Activated naive CD8-positive, alpha-beta T cell treated with anti-CD3 and anti-CD28 coated beads, Interleukin-2, amount 10 ng/mL, durations not matched to agents 7 days and 5 days (primary cell): ENCODE measurements at regions of chr1 and their contacts with region 1.

Region 1: GRCh38 chr1:52404116-52404986 is at the starts of genes ORC1 and PRPF38A:
- DNase-seq: peak; percentile 96
- ATAC-seq: peak; percentile 92
- H3K4me3 Mint-ChIP-seq: peak within 1 kb of the TSS; percentile 100
- H3K27ac Mint-ChIP-seq: peak within 1 kb of the TSS; percentile 100
- H3K4me1 Mint-ChIP-seq: peaks cover 45% of the 10 kb centered on the region
- H3K27me3 Mint-ChIP-seq: no peaks in the 10 kb centered on the region
- total RNA-seq, gene ORC1: 25.6 to 25.7 TPM
- total RNA-seq, gene PRPF38A: 87.1 to 92.1 TPM

Region 2: DNA sequence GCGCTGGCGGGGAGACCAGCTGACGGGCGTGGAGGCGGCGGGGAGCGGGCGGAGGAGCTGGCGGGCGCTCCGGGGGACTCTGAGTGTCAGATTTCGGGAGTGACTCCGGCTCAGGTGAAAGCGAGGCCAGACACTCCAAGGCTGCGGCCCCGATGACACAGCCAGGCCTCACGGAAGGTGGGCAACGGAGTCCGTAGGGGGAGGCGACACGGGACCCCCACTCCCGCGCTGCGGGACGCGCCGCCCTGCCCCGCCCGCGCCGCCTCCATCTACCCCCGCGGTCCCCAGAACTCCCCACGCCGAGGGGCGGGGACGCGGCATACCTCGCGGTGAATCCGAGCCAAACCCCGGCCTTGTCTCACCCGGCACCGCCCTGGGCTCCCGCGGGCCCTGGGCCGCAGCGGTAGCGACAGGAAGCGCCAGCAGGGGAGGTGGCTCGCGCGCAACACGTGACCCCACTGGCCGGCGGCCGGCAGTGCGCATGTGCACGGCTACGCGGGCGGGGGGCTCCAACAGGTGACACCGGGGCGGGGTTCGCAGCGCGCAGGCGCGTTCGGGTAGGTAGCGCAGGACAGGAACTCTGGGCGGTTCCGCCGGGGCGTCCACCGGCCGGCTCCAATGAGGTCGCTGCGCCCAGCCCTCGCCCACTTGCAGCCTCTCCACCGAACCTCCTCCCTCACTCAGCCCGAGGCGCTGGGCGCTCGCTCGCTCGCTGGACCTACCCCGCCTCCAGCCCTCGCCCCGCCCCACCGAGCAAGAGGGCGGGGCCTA is 38.4 kb before region 1 on chr1 and contains the start of gene CC2D1B:
- POLR2A ChIA-PET with region 1: interaction called, 34 read pairs
- DNase-seq: peak; percentile 100
- ATAC-seq: peak; percentile 97
- H3K4me3 Mint-ChIP-seq: peak within 1 kb of the TSS; percentile 98
- H3K27ac Mint-ChIP-seq: peak within 1 kb of the TSS; percentile 98
- H3K4me1 Mint-ChIP-seq: peaks cover 34% of the 10 kb centered on the region
- H3K27me3 Mint-ChIP-seq: no peaks in the 10 kb centered on the region
- total RNA-seq, gene CC2D1B: 69.3 to 75.6 TPM

Region 3: GRCh38 chr1:52416811-52417210 is 12.5 kb after region 1 on chr1:
- POLR2A ChIA-PET with region 1: interaction called, 22 read pairs
- DNase-seq: no peak
- ATAC-seq: no peak
- H3K4me3 Mint-ChIP-seq: no peak overlapping the region
- H3K27ac Mint-ChIP-seq: peak overlapping the region; percentile 45
- H3K4me1 Mint-ChIP-seq: peaks cover 9% of the 10 kb centered on the region
- H3K27me3 Mint-ChIP-seq: no peaks in the 10 kb centered on the region

Region 4: GRCh38 chr1:52424231-52424636 is 19.9 kb after region 1 on chr1:
- POLR2A ChIA-PET with region 1: interaction called, 29 read pairs
- DNase-seq: no peak
- ATAC-seq: peak; percentile 90
- H3K4me3 Mint-ChIP-seq: peak overlapping the region; percentile 28
- H3K27ac Mint-ChIP-seq: peak overlapping the region; percentile 78
- H3K4me1 Mint-ChIP-seq: peaks cover 35% of the 10 kb centered on the region
- H3K27me3 Mint-ChIP-seq: no peaks in the 10 kb centered on the region

Region 5: DNA sequence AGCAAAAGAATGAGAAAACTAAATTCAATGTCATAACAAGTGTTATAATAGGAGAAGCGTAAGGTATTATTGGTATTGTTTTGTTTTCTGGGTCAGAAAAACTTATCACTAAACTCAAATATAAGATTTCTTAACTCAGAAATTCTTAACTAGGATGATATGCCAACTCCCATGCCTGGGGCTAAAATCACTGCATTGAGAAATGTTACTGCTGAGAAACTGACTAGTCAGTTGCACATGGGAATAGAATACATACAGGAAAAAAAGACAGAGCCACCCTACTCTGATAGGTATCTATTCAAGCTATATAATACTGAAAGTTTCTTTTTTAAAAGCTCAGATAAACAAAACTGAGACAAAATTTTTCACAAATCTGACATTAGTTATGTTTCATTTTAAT is 56.3 kb after region 1 on chr1:
- POLR2A ChIA-PET with region 1: no interaction called
- DNase-seq: no peak
- ATAC-seq: no peak
- H3K4me3 Mint-ChIP-seq: no peak overlapping the region
- H3K27ac Mint-ChIP-seq: no peak overlapping the region
- H3K4me1 Mint-ChIP-seq: no peaks in the 10 kb centered on the region
- H3K27me3 Mint-ChIP-seq: no peaks in the 10 kb centered on the region

Region 6: DNA sequence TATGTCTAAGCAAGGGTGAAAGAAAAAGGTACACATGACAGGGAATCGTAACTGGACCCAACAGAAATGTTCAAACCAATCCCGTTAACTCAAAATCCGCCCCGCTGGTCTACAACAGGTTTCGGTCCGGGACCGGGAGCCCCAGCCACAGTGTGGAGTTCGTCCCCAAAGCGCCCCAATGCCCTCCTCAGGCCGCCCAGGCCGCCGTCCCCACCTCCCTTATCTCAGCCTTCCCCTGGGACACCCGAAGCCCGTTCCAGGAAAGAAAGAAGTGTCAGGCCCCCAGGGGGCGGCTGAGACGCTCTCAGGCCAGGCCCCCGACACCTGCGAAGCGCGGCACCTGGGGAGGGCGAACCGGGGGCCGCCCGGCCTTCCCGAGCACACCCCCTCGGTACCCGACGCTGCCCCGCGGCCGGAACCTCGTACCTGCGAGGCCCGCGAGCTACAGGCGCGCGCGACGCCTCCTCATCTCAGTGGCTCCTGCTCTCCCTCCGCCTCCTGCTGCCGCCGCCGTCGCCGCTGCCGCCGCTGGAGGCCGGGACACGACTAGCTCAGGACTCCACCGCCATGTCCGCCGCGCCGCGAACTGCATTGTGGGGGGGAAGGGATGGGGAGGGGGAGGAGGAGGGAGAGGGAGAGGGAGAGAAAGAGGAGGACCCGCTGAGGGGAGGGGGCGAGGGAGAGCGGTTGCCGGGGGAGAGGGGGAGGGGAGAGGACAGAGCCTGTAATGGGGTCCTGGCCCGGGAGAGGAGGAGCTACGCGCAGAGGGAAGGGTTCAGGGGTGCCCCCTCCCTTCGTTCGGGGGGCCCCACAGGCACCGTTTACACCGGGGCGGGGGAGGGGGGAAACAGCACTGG is 148.4 kb after region 1 on chr1 and contains the start of gene TUT4:
- POLR2A ChIA-PET with region 1: interaction called, 32 read pairs
- DNase-seq: peak; percentile 81
- ATAC-seq: peak; percentile 51
- H3K4me3 Mint-ChIP-seq: peak within 1 kb of the TSS; percentile 70
- H3K27ac Mint-ChIP-seq: peak within 1 kb of the TSS; percentile 73
- H3K4me1 Mint-ChIP-seq: peaks cover 14% of the 10 kb centered on the region
- H3K27me3 Mint-ChIP-seq: peaks cover 2% of the 10 kb centered on the region
- total RNA-seq, gene TUT4: 104 to 110 TPM

Region 7: DNA sequence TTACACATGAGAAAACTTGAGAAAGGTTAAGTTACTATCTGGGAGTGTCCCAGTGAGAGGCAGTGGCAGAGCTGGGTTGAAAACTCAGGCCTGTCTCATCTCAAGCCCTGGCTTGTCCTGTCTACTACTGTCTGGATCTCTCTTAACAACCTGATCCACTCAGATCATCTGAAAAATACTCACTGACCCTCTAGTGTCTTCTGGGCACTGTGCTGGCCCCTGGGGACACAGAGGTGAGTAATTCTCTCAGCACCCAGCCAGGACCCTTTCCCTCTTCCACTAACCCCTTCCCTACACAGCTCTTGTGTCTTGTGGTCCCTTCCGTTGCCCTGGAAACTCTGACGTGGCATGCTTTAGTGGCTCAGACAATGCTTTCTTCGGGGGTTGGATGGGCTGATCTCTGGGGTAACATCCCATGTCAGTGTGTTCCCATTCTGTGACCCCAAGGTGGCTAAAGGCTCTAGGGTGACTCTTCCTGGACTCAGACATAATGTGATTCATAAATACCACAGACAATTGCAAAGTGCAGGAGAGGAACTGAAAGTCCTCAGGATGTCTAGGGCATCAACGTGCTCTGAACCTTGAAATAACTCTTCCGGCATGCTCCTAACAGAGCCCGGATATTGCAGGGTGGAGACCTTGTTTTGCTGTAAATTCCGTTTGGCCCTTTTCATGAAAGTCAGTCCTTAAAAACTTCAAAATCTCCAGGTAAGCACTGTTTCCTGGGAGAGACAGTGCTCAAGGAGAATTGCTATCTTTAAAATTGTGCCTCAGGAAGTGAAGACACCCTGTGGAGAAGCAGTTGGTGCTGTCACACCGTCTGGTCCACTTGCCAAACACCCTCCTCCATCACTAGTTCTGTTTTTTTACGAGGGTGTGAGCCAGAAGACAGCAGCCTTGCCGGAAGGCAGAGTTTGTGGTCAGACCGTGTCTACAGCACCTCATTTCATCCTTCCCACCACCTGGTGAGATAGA is 232.7 kb after region 1 on chr1:
- POLR2A ChIA-PET with region 1: interaction called, 16 read pairs
- DNase-seq: peak; percentile 71
- ATAC-seq: peak; percentile 65
- H3K4me3 Mint-ChIP-seq: peak overlapping the region; percentile 82
- H3K27ac Mint-ChIP-seq: peak overlapping the region; percentile 100
- H3K4me1 Mint-ChIP-seq: peaks cover 55% of the 10 kb centered on the region
- H3K27me3 Mint-ChIP-seq: no peaks in the 10 kb centered on the region